ENCODE measurements at regions of chr18 and their contacts with region 1.

Region 1: DNA sequence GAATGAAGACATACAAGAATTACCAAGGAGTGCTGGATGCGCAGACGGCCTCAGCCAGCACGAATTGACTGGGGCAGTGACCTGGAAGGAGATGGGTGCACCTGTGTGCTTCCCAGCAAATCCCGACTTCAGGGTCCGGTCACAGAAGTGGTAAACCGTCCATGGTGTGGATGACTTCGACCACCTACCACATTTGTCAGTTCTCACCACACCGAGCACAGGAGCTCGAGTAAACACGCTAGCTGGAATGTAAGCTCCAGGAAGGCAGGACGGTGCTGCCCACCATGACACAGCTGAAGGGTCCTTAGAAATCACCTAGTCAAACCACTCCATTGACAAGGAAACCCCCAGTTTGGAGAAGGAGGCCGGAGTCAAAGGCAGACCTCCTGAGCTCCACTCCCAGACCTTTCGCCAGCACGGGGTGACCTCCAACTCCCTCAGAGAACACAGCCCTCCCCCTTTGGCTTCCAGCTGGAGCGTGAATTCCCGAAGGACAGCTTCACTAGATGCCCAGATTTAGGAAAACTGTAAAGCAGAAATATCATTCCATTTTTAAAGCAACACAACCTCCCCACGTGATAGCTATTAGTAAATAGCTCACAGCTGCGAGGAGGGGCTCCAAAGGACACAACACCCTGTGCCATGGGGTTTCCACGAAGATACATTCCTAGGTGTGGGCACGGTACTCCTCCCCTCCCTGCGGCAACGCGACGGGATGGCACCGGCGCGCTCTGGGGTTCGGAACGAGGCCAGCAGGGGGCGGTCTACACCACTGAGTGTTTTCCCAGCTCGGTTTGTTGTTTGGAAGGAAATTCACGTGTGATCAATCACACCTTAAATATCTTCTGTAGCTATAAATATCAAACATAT is 34.1 kb upstream of the GNAL start:
- DNase-seq: peak; percentile 67
- ATAC-seq: peak; percentile 64
- H3K4me3 Mint-ChIP-seq: no peak overlapping the region
- H3K27ac Mint-ChIP-seq: no peak overlapping the region
- H3K4me1 Mint-ChIP-seq: no peaks in the 10 kb centered on the region
- H3K27me3 Mint-ChIP-seq: peaks cover 24% of the 10 kb centered on the region
- CTCF ChIP-seq: peak; percentile 89

Region 2: GRCh38 chr18:11529081-11529480 is 125.9 kb before region 1 on chr18:
- CTCF ChIA-PET with region 1: no interaction called
- POLR2A ChIA-PET with region 1: no interaction called
- intact Hi-C with region 1: no loop called
- DNase-seq: no peak
- ATAC-seq: no peak
- H3K4me3 Mint-ChIP-seq: no peak overlapping the region
- H3K27ac Mint-ChIP-seq: no peak overlapping the region
- H3K4me1 Mint-ChIP-seq: no peaks in the 10 kb centered on the region
- H3K27me3 Mint-ChIP-seq: no peaks in the 10 kb centered on the region
- CTCF ChIP-seq: no peak

Region 3: GRCh38 chr18:11669271-11669947 is 14.4 kb after region 1 on chr18:
- CTCF ChIA-PET with region 1: interaction called, 25 read pairs
- POLR2A ChIA-PET with region 1: no interaction called
- intact Hi-C with region 1: no loop called
- DNase-seq: no peak
- ATAC-seq: no peak
- H3K4me3 Mint-ChIP-seq: no peak overlapping the region
- H3K27ac Mint-ChIP-seq: no peak overlapping the region
- H3K4me1 Mint-ChIP-seq: no peaks in the 10 kb centered on the region
- H3K27me3 Mint-ChIP-seq: no peaks in the 10 kb centered on the region
- CTCF ChIP-seq: no peak

Region 4: DNA sequence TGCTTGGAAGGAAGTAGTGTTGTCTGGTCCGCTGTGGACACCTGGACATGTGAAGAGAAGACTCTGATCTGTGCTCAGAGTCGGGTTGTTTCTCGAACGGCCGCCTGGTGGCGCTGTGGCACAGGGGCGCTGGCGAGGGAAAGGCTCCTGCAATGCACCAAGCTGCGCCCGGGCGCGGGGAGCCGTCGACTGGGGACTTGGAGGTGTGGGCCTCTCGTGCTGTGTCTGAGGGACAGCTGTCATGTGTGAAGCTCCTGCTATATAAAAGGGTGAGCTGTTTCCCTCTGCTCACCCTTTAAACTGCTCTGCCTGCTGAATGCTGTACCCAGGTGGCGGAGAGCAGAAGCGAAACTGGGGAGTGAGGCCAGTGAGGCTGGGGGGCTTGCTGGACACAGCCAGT is 78.1 kb after region 1 on chr18:
- CTCF ChIA-PET with region 1: interaction called, 19 read pairs
- POLR2A ChIA-PET with region 1: no interaction called
- intact Hi-C with region 1: no loop called
- DNase-seq: peak; percentile 80
- ATAC-seq: peak; percentile 91
- H3K4me3 Mint-ChIP-seq: no peak overlapping the region
- H3K27ac Mint-ChIP-seq: no peak overlapping the region
- H3K4me1 Mint-ChIP-seq: no peaks in the 10 kb centered on the region
- H3K27me3 Mint-ChIP-seq: peaks cover 32% of the 10 kb centered on the region
- CTCF ChIP-seq: peak; percentile 90

Region 5: DNA sequence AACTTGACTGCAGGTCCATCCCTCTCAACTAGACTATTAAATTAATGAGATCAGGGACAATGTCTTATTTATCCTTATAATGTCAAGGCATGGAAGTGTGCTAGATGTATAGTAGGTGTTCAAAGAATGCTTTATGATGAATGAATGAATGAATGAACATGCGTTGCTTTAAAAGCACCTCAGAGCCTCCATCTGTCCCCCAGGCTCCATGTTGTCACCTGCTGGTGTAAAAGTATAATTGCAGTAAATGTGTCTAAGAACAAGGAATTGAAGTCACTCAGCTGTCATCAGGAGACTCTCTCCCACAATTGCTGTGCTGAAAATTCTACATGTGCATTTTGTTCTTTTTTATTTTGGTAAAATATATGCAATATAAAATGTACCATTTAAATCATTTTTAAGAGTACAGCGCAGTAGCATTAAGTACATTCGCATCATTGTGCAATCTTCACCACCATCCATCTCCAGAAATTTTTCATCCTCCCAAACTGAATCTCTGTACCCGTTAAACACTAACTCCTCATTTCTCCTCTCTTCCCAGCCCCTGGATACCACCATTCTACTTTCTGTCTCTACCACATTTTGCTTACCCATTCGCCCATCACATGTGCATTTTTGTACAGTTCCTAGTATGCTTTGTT is 86.7 kb after region 1 on chr18:
- CTCF ChIA-PET with region 1: interaction called, 10 read pairs
- POLR2A ChIA-PET with region 1: no interaction called
- intact Hi-C with region 1: no loop called
- DNase-seq: no peak
- ATAC-seq: peak; percentile 51
- H3K4me3 Mint-ChIP-seq: no peak overlapping the region
- H3K27ac Mint-ChIP-seq: no peak overlapping the region
- H3K4me1 Mint-ChIP-seq: no peaks in the 10 kb centered on the region
- H3K27me3 Mint-ChIP-seq: peaks cover 13% of the 10 kb centered on the region
- CTCF ChIP-seq: peak; percentile 71

Region 6: GRCh38 chr18:11995445-11996189 is 340.6 kb after region 1 on chr18:
- CTCF ChIA-PET with region 1: interaction called, 17 read pairs
- POLR2A ChIA-PET with region 1: no interaction called
- intact Hi-C with region 1: no loop called
- DNase-seq: peak; percentile 70
- ATAC-seq: peak; percentile 85
- H3K4me3 Mint-ChIP-seq: no peak overlapping the region
- H3K27ac Mint-ChIP-seq: no peak overlapping the region
- H3K4me1 Mint-ChIP-seq: peaks cover 6% of the 10 kb centered on the region
- H3K27me3 Mint-ChIP-seq: no peaks in the 10 kb centered on the region
- CTCF ChIP-seq: peak; percentile 75

Region 7: GRCh38 chr18:12038639-12039417 is 383.9 kb after region 1 on chr18:
- CTCF ChIA-PET with region 1: interaction called, 14 read pairs
- POLR2A ChIA-PET with region 1: no interaction called
- intact Hi-C with region 1: loop called (anchors 10 kb)
- DNase-seq: peak; percentile 74
- ATAC-seq: peak; percentile 93
- H3K4me3 Mint-ChIP-seq: peak overlapping the region; percentile 58
- H3K27ac Mint-ChIP-seq: no peak overlapping the region
- H3K4me1 Mint-ChIP-seq: peaks cover 6% of the 10 kb centered on the region
- H3K27me3 Mint-ChIP-seq: peaks cover 11% of the 10 kb centered on the region
- CTCF ChIP-seq: peak; percentile 99

Region 8: DNA sequence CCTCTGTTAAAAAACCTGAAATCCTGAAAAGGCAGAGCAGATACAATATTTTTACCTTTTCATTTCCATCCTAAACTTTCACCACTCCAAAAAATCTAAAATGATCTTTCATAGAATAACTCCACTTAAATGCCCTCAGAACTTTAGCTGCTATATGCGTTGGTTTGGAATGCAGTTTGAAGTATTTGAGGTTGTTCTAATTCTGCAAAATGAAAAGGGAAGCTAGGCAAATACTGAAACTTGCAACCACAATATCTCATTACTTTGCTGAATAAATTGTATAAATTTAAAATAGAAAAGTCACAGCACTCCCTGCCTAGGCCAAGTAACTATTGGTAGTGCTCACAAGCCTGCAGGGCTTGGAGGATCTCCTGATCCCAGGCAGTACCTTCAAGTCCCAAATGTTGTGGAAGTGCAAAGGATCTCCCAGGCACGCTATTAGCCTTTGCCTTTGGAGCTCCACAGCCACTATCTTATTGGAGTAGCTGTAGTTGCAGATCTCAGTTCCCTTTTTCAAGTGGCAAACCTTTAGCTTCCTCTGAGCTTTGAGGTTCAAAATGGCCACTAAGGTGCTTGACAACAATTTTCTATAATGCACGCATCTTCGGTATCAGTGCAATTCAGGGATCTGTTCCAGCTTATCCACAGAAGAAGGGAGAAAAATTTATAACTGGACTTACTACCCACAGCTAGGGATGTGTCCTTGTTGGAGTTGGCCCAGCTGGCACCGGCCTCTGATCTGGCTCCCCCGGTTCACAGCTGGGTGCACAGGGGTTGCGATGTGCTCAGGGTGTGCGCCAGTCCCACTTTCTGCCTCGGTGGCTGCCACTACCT is 395.2 kb after region 1 on chr18:
- CTCF ChIA-PET with region 1: interaction called, 3 read pairs
- POLR2A ChIA-PET with region 1: no interaction called
- intact Hi-C with region 1: loop called (anchors 10 kb)
- DNase-seq: no peak
- ATAC-seq: no peak
- H3K4me3 Mint-ChIP-seq: no peak overlapping the region
- H3K27ac Mint-ChIP-seq: no peak overlapping the region
- H3K4me1 Mint-ChIP-seq: peaks cover 3% of the 10 kb centered on the region
- H3K27me3 Mint-ChIP-seq: peaks cover 2% of the 10 kb centered on the region
- CTCF ChIP-seq: no peak

Measured in activated CD8-positive, alpha-beta T cell treated with anti-CD3 and anti-CD28 coated beads for 36 hours (primary cell).